ENCODE measurements at regions of chr2 and their contacts with region 1.

Region 1: GRCh38 chr2:222730366-222730999 is 59.0 kb downstream of the MOGAT1 start:
- DNase-seq: no peak
- H3K4me3 ChIP-seq: no peak overlapping the region
- H3K27ac ChIP-seq: no peak overlapping the region
- H3K4me1 ChIP-seq: peaks cover 6% of the 10 kb centered on the region
- H3K27me3 ChIP-seq: no peaks in the 10 kb centered on the region
- CTCF ChIP-seq: no peak
- POLR2A ChIP-seq: no peak

Region 2: DNA sequence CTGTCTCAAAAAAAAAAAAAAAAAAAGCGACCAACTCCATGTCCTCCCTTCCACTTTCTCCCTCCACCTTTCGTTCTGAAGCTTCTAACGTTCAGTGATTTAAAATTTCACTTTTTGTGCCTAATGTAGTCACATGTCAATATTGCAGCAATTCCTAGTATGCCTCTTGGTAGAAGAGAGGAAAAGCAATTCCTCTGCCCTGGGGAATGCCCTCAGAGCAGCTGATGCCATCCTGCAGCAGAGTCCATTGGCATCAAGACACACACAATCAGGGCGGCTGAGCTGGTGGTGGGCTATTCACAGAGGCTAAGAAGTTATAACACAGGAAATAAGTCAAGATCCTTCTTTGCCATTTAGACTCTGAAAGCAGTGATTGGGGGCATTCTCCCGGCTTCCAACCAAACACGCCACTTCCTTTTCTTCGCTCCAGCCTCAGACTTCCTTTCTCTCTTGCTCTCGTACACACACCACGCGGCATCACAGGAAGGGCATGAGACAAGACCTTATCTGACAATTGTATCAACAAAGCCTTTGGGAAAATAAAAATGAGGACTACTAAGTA is 12.8 kb after region 1 on chr2:
- CTCF ChIA-PET with region 1: interaction called, 3 read pairs
- POLR2A ChIA-PET with region 1: interaction called, 6 read pairs
- dilution Hi-C with region 1: no loop called
- intact Hi-C with region 1: loop called (anchors 1 kb)
- DNase-seq: peak; percentile 81
- H3K4me3 ChIP-seq: peak overlapping the region in 1 of 3 experiments; percentile 21
- H3K27ac ChIP-seq: peak overlapping the region; percentile 37
- H3K4me1 ChIP-seq: peaks cover 10% of the 10 kb centered on the region
- H3K27me3 ChIP-seq: no peaks in the 10 kb centered on the region
- CTCF ChIP-seq: no peak
- POLR2A ChIP-seq: no peak

Region 3: GRCh38 chr2:222753251-222753824 is 22.9 kb after region 1 on chr2:
- CTCF ChIA-PET with region 1: no interaction called
- POLR2A ChIA-PET with region 1: no interaction called
- dilution Hi-C with region 1: no loop called
- intact Hi-C with region 1: loop called (anchors 1 kb)
- DNase-seq: no peak
- H3K4me3 ChIP-seq: no peak overlapping the region
- H3K27ac ChIP-seq: no peak overlapping the region
- H3K4me1 ChIP-seq: peaks cover 10% of the 10 kb centered on the region
- H3K27me3 ChIP-seq: no peaks in the 10 kb centered on the region
- CTCF ChIP-seq: no peak
- POLR2A ChIP-seq: no peak

Region 4: DNA sequence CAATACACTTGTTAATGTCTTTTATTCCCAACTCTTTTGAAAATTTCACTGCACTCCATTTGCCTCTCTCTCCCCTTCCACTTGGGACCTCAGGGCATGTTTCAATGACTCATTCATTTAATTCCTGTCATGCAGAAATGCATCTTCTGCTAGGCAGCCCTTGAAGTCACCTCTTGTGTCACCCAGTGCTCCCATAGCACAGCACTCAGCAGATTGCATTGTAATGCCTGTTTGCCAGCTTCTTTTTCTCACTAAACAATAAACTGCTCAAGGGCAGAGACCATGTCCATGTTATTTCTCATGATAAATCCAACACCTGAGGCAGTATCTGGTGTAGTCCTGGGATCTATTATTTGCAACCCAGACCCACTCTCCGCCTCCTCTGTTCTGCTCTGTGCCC is 44.5 kb after region 1 on chr2:
- CTCF ChIA-PET with region 1: no interaction called
- POLR2A ChIA-PET with region 1: no interaction called
- dilution Hi-C with region 1: no loop called
- intact Hi-C with region 1: no loop called
- DNase-seq: no peak
- H3K4me3 ChIP-seq: no peak overlapping the region
- H3K27ac ChIP-seq: no peak overlapping the region
- H3K4me1 ChIP-seq: no peaks in the 10 kb centered on the region
- H3K27me3 ChIP-seq: no peaks in the 10 kb centered on the region
- CTCF ChIP-seq: no peak
- POLR2A ChIP-seq: no peak

Measured in endothelial cell of umbilical vein (primary cell).